ENCODE measurements at regions of chr13 and their contacts with region 1.

Region 1: GRCh38 chr13:43786773-43787517 is at the start of gene ENOX1:
- DNase-seq: peak; percentile 69 to 76
- H3K4me3 ChIP-seq: peak within 1 kb of the TSS; percentile 50
- H3K4me1 ChIP-seq: peaks cover 11% of the 10 kb centered on the region
- H3K27me3 ChIP-seq: no peaks in the 10 kb centered on the region

Region 2: DNA sequence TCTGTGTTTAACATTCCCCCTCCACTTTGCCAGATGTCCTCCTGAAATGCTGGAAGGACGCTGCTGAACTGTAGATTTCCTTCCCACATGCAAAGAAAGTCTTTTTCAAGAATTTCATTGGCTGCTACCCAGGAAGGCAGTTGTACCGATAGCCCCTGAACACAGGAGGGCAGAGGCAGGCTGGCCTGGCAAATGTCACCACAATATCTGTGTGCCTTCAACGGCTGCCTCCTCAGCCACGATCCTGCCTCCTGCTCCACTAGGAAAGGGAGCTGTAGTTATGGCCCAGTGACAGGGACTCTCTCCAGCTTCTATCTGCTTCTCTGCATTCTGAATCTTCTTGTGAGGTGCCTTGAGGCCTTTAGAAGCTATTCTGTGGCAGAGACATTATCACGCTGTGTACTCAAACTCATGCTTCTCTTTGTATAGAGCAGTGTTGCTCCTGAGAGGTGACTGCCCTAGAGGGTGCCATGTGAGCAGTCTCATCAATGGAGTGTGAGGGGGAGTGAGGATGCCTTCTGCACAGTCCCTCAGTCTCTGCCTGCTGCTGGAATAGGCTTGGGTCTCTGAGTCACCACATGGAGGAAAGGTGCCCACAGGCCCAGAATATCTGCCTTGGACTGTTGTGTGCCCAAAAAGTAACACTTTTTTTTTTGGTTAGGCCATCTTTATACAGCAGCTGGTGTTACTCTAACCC is 483.8 kb before region 1 on chr13:
- in situ Hi-C with region 1: loop called (anchors 25 kb)
- DNase-seq: peak; percentile 51 to 75
- H3K4me3 ChIP-seq: no peak overlapping the region
- H3K4me1 ChIP-seq: peaks cover 5% of the 10 kb centered on the region
- H3K27me3 ChIP-seq: no peaks in the 10 kb centered on the region

Measured in HAP-1 (cell line).